Right ventricle myocardium inferior (tissue), 1 donor: ENCODE measurements at regions of chr15 and their contacts with region 1.

Region 1: GRCh38 chr15:71596672-71597071 is 213.7 kb upstream of the NR2E3 start:
- DNase-seq: peak; percentile 77
- ATAC-seq: peak; percentile 90

Region 2: GRCh38 chr15:71501344-71502076 is 95.2 kb before region 1 on chr15:
- intact Hi-C with region 1: loop called (anchors 5 kb)
- DNase-seq: no peak
- ATAC-seq: peak; percentile 88

Region 3: DNA sequence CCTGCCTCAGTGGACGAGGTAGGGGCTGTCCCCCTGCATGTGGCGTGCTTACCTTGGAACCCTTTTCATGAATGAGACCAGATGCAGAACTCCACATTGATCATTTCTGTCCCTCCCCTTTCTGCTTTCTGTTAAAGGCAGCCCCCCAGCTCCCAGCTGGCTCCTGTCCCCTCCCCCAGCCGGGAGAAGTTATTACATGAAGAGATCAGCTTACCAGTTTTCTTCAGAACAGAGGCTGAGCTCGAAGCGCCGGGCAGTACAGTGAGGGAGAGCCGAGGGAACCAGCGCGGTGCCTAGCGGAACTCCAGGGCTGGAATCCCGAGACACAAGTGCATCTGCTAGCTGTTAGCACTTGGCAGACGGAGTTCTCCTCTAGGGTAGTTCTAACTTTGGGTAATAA is 49.7 kb before region 1 on chr15:
- intact Hi-C with region 1: loop called (anchors 5 kb)
- DNase-seq: peak; percentile 74
- ATAC-seq: peak; percentile 66